ENCODE measurements at regions of chr4 and their contacts with region 1.

Region 1: DNA sequence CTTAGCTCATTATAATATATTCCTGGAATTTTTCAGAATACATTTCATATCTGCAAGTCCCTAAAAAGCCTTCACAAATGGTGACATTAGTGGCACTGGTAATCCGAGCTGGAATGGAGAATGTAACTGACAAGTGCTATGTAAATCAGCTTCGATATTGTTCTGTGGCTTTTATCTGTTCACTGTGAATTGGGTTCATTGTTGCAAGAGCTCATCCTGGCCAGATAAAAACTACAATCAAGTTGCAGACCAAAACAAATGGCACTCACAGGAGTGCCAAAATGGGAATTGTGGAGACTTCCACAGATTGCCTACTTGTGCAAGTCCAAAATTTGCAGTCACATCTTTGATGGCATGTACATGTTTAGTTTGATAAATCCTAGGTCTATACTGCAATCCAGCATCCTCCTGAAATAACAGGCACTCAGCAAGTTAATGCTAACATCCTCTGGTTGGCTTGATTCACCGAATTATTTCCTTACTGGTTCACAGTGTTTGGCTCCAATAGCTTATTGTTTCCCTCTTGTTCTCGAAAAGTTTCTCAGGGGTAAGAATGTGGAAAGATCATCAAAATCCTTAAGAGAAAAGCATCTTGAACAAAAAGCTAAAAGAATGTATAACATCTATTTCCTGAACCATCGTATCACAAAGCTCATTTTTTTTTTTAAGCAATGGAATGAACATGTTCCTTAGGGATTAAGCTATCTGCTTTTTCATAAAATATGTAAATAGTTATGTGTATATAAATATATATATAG is 904.9 kb downstream of the CENPC start:
- DNase-seq: no peak
- ATAC-seq: no peak
- H3K4me3 ChIP-seq: no peak overlapping the region
- H3K4me3 Mint-ChIP-seq: no peak overlapping the region
- H3K27ac ChIP-seq: no peak overlapping the region
- H3K27ac Mint-ChIP-seq: no peak overlapping the region
- H3K4me1 ChIP-seq: no peaks in the 10 kb centered on the region
- H3K4me1 Mint-ChIP-seq: no peaks in the 10 kb centered on the region
- H3K27me3 ChIP-seq: no peaks in the 10 kb centered on the region
- H3K27me3 Mint-ChIP-seq: no peaks in the 10 kb centered on the region

Region 2: DNA sequence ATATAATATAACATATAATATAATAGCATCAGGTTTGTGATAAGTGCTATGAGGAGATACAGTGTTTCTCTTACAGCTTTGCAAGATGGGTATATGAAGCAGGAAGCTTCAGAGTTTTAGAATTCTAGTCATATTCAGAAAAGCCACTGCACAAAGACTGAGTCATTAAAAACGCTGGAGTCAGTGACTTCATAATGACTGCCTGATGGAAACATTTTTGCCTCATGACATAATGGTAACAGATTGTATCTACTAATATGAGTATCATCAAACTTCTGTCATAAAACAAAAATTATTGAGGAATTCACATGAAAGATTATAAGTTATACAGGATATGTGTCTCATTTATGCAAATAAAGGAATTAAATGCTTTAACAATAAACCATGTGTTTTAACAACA is 1016.9 kb before region 1 on chr4:
- CTCF ChIA-PET with region 1: no interaction called
- POLR2A ChIA-PET with region 1: no interaction called
- intact Hi-C with region 1: no loop called
- DNase-seq: no peak
- ATAC-seq: no peak
- H3K4me3 ChIP-seq: no peak overlapping the region
- H3K4me3 Mint-ChIP-seq: no peak overlapping the region
- H3K27ac ChIP-seq: no peak overlapping the region
- H3K27ac Mint-ChIP-seq: no peak overlapping the region
- H3K4me1 ChIP-seq: no peaks in the 10 kb centered on the region
- H3K4me1 Mint-ChIP-seq: no peaks in the 10 kb centered on the region
- H3K27me3 ChIP-seq: no peaks in the 10 kb centered on the region
- H3K27me3 Mint-ChIP-seq: no peaks in the 10 kb centered on the region

Region 3: DNA sequence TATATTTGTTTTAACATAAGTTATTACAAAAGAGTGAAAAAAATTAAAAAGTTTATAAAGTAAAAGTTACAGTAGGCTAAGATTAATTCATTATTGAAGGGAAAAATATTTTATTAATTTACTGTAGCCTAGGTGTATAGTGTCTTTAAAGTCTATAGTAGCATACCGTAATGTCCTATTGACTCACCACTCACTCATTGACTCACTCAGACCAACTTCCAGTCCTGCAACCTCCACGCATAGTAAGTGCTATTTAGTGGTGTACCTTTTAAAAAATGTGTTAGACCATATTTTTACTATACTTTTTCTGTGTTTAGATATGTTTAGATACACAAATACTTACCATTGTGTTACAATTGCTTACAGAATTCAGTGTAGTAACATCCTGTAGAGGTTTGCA is 63.8 kb after region 1 on chr4:
- CTCF ChIA-PET with region 1: no interaction called
- POLR2A ChIA-PET with region 1: no interaction called
- intact Hi-C with region 1: loop called in 1 of 2 experiments (anchors 10 kb)
- DNase-seq: no peak
- ATAC-seq: no peak
- H3K4me3 ChIP-seq: no peak overlapping the region
- H3K4me3 Mint-ChIP-seq: no peak overlapping the region
- H3K27ac ChIP-seq: no peak overlapping the region
- H3K27ac Mint-ChIP-seq: no peak overlapping the region
- H3K4me1 ChIP-seq: no peaks in the 10 kb centered on the region
- H3K4me1 Mint-ChIP-seq: no peaks in the 10 kb centered on the region
- H3K27me3 ChIP-seq: no peaks in the 10 kb centered on the region
- H3K27me3 Mint-ChIP-seq: no peaks in the 10 kb centered on the region

Measured in naive thymus-derived CD4-positive, alpha-beta T cell (primary cell).